ENCODE measurements at regions of chr11 and their contacts with region 1.

Region 1: DNA sequence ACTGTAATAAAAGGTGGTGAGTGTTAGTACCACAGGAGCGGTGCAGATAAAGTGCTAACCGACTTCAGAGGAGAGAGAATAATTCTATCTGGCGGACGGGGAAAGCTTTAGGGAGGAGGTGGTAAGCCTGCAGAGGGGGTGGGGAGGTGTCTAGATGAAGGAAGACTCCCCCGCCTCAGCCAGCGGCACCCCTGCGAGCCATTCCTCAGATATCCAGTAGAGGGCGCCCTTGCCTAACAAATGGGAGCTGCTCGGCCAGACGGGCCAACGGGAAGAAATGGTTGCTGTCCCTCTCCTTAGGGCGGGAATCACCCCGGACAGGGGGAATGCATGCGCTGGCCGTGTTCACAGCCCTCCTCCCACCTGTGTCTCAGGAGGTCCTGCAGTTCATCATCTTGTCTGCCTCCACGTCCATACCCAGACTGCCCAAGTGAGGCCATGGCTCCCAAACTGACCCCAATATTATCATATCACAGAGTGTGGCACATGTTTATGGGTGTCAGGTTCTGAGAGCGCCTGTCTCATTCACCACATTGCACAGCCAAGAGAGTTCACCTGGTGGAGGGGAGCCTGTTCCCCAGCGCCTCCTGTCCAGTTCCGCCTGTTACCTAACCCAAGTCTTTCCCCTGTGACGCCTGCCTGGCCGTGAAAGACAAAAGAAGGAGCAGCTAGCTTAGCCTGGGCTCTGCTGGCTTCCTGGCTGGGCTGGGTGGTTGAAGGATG is 85.5 kb downstream of the ST3GAL4 start:
- DNase-seq: peak; percentile 41 to 82 (median 65)
- ATAC-seq: peak; percentile 72
- H3K4me3 ChIP-seq: no peak overlapping the region
- H3K4me3 Mint-ChIP-seq: no peak overlapping the region
- H3K27ac ChIP-seq: no peak overlapping the region
- H3K27ac Mint-ChIP-seq: no peak overlapping the region
- H3K4me1 ChIP-seq: peaks cover 6% of the 10 kb centered on the region in 2 donors
- H3K4me1 Mint-ChIP-seq: peaks cover 0 to 5% (median 0%) of the 10 kb centered on the region in 7 donors
- H3K27me3 ChIP-seq: no peaks in the 10 kb centered on the region
- H3K27me3 Mint-ChIP-seq: peaks cover 0 to 16% (median 3%) of the 10 kb centered on the region in 5 donors

Region 2: DNA sequence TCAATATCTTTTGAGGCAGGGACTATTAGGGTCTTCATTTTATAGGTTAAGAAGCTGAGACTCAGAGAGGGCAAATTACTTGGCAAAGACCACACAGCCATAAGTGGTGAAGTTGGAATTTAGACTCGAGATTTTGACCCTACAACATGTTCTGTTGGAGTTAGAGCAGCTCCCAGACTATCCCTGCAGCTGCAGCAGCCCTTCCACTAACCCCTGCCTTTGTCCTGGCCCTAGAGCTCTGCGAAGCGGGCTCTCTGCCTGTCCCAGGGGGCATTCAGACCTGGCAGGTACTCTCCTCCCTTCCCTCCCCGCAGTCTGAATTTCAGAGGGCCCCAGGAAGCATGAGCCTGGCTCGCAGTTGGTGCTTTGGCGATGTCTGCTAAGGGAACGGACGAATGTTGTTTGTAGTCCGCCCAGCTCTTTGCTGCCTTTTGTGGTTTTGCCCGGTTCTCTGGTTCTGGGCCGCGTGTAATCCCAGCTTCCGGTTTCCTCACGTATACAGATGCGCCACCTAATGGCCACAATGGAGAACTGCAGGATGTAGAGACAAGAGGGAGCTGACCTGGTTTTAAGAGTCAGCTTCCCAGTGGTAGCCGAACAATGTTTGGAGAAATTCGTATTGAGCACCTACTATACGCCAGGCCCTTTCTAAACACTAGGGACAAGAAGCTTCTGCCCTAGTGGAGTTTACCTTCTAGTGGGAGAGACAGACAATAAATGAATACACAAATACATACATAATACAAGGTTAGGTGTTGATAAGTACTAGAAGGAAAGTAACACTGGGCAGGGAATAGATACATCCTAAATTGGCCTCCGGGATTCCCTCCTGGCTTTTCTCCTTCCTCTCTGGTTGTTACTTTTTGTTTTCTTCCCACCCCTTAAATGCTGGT is 39.7 kb after region 1 on chr11:
- CTCF ChIA-PET with region 1: interaction called, 46 read pairs
- POLR2A ChIA-PET with region 1: interaction called, 3 read pairs
- intact Hi-C with region 1: loop called (anchors 1 kb)
- DNase-seq: peak; percentile 45 to 76 (median 65)
- ATAC-seq: peak; percentile 93
- H3K4me3 ChIP-seq: peak overlapping the region; percentile 31
- H3K4me3 Mint-ChIP-seq: peak overlapping the region; percentile 22 to 79 (median 68)
- H3K27ac ChIP-seq: no peak overlapping the region
- H3K27ac Mint-ChIP-seq: peak overlapping the region; percentile 35 to 88 (median 70)
- H3K4me1 ChIP-seq: peaks cover 0 to 13% of the 10 kb centered on the region in 2 donors
- H3K4me1 Mint-ChIP-seq: peaks cover 12 to 29% (median 19%) of the 10 kb centered on the region in 7 donors
- H3K27me3 ChIP-seq: no peaks in the 10 kb centered on the region
- H3K27me3 Mint-ChIP-seq: peaks cover 0 to 6% (median 0%) of the 10 kb centered on the region in 5 donors

Region 3: GRCh38 chr11:126989942-126990715 is 549.2 kb after region 1 on chr11:
- CTCF ChIA-PET with region 1: no interaction called
- POLR2A ChIA-PET with region 1: no interaction called
- intact Hi-C with region 1: loop called in 1 of 2 experiments (anchors 1 kb)
- DNase-seq: peak in 7 of 9 donors; percentile 2 to 59 (median 20)
- ATAC-seq: peak; percentile 58
- H3K4me3 ChIP-seq: no peak overlapping the region
- H3K4me3 Mint-ChIP-seq: no peak overlapping the region
- H3K27ac ChIP-seq: no peak overlapping the region
- H3K27ac Mint-ChIP-seq: no peak overlapping the region
- H3K4me1 ChIP-seq: no peaks in the 10 kb centered on the region
- H3K4me1 Mint-ChIP-seq: peaks cover 0 to 2% (median 0%) of the 10 kb centered on the region in 7 donors
- H3K27me3 ChIP-seq: no peaks in the 10 kb centered on the region
- H3K27me3 Mint-ChIP-seq: peaks cover 7 to 49% (median 31%) of the 10 kb centered on the region in 5 donors

Region 4: DNA sequence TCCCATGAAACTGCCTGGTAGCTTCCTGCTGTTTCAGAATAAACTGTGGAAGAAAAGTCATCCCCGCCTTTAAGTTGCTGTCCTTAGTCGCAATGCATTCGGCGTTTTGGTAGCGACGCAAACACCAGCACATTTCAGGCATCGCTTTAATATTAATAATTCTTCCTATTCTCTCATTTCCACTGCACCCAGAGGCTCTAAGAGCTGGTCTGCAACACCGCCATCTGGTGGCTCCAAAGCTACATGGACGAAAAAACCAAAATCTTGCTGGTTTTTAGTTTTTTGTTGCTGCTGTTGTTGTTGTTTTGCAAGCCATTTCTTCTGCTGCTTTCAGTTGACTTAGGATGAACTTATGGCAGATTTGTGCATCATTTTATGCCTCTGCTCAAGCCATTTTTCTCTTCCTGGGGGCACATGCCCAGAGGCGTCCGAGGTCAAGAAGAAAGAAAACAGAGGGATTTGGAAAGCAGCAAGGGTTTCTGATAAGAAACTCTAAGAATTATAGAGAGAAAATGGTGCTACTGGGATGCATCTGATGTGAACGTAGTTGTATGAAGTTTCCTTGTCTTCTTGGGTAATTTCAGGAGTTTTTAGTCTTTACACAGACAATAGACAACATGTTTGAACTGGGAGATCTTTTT is 905.0 kb after region 1 on chr11:
- CTCF ChIA-PET with region 1: interaction called, 10 read pairs
- POLR2A ChIA-PET with region 1: no interaction called
- intact Hi-C with region 1: no loop called
- DNase-seq: peak in 2 of 9 donors; percentile 1 to 2
- ATAC-seq: no peak
- H3K4me3 ChIP-seq: no peak overlapping the region
- H3K4me3 Mint-ChIP-seq: no peak overlapping the region
- H3K27ac ChIP-seq: no peak overlapping the region
- H3K27ac Mint-ChIP-seq: no peak overlapping the region
- H3K4me1 ChIP-seq: no peaks in the 10 kb centered on the region
- H3K4me1 Mint-ChIP-seq: peaks cover 0 to 1% (median 0%) of the 10 kb centered on the region in 7 donors
- H3K27me3 ChIP-seq: no peaks in the 10 kb centered on the region
- H3K27me3 Mint-ChIP-seq: peaks cover 0 to 23% (median 6%) of the 10 kb centered on the region in 5 donors

Region 5: DNA sequence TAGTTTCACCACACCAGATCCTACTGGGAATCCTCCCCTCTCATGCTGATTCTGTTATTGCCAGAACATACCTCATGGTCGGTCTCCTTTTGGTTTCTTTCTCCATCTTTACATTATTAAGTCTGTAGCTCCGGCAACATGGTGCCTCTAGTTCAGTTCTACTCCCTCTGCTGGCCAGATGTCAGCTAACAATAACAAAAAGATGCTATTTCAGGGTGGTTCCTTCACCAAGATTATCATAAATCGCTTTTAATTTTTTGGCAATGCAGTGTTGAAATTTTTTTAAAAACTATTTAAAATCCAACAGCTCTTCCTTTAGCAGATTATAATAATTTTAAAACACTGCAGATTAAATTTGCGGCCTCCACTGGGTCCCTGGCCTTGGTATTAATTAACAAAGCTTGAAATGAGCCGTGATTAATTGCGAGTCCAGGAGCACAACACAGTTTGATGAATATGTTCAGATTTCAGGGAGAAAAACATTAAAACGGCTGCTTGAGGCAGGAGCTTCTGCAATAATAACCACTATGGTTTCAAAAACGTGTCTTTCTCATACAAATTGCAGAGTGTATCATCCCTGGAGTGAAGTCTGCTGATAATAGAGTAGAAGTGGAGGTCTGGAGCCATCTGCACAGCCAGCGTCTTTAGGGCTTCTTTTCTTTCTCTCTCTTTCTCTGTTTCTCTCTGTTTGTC is 1052.5 kb after region 1 on chr11:
- CTCF ChIA-PET with region 1: no interaction called
- POLR2A ChIA-PET with region 1: no interaction called
- intact Hi-C with region 1: loop called in 1 of 2 experiments (anchors 5 kb)
- DNase-seq: no peak
- ATAC-seq: no peak
- H3K4me3 ChIP-seq: no peak overlapping the region
- H3K4me3 Mint-ChIP-seq: peak overlapping the region in 1 of 10 donors; percentile 33
- H3K27ac ChIP-seq: no peak overlapping the region
- H3K27ac Mint-ChIP-seq: no peak overlapping the region
- H3K4me1 ChIP-seq: no peaks in the 10 kb centered on the region
- H3K4me1 Mint-ChIP-seq: no peaks in the 10 kb centered on the region
- H3K27me3 ChIP-seq: no peaks in the 10 kb centered on the region
- H3K27me3 Mint-ChIP-seq: peaks cover 0 to 4% (median 0%) of the 10 kb centered on the region in 5 donors

Measured in naive thymus-derived CD4-positive, alpha-beta T cell (primary cell).